AG04449 (cell line): ENCODE measurements at regions of chr9 and their contacts with region 1.

Region 1: GRCh38 chr9:107425101-107426045 is 64.2 kb downstream of the KLF4 start:
- DNase-seq: no peak
- H3K4me3 ChIP-seq: peak overlapping the region; percentile 27
- CTCF ChIP-seq: peak; percentile 92

Region 2: DNA sequence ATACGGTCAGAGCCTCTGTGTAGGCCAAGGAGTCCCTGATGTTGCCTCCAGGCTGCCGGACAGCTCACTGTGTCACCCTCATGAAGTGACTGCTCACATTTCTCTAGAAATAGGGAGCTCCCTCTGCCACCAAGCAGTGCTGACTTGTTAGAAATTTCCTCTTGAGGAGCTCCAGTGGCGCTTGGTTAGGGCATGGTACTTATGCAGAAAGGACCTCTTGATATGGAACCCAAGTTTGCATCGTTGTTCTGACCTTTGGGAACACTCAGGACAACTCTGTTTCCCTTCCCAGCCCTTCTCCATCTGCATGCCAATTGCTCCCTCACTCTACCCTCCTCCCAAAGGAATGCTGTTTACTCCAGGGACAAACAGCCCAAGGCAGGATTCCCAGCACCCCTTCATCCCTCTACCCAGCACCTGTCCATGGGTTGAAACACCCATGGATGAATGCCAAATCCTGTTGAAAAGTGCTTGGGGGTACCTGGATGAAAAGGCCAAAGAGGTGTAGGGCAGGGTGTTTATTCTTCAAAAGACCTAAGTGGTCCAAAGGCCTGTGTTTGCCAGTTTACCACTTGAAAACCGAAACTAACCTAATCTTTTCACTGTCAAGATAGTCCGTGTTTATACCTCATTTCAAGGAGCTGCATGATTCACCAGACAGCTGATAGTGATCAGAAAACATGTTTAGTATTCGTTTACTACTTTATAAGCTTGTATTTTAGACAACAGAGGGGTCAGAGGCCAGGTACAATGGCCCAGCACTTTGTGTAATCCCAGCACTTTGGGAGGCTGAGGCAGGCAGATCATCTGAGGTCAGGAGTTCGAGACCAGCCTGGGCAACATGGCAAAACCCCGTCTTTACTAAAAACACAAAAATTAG is 13.1 kb after region 1 on chr9:
- CTCF ChIA-PET with region 1: interaction called, 13 read pairs
- POLR2A ChIA-PET with region 1: no interaction called
- DNase-seq: no peak
- H3K4me3 ChIP-seq: no peak overlapping the region
- CTCF ChIP-seq: no peak